Activated CD8-positive, alpha-beta T cell treated with anti-CD3 and anti-CD28 coated beads for 36 hours (primary cell): ENCODE measurements at regions of chr12 and their contacts with region 1.

Region 1: GRCh38 chr12:121095544-121096198 is 37.0 kb upstream of the P2RX7 start:
- DNase-seq: peak; percentile 87
- ATAC-seq: peak; percentile 91
- H3K4me3 Mint-ChIP-seq: peak overlapping the region; percentile 55
- H3K27ac Mint-ChIP-seq: no peak overlapping the region
- H3K4me1 Mint-ChIP-seq: peaks cover 39% of the 10 kb centered on the region
- H3K27me3 Mint-ChIP-seq: peaks cover 5% of the 10 kb centered on the region
- CTCF ChIP-seq: peak; percentile 90

Region 2: GRCh38 chr12:121110211-121110940 is 14.7 kb after region 1 on chr12:
- CTCF ChIA-PET with region 1: interaction called, 10 read pairs
- POLR2A ChIA-PET with region 1: no interaction called
- intact Hi-C with region 1: no loop called
- DNase-seq: peak; percentile 82
- ATAC-seq: peak; percentile 86
- H3K4me3 Mint-ChIP-seq: no peak overlapping the region
- H3K27ac Mint-ChIP-seq: no peak overlapping the region
- H3K4me1 Mint-ChIP-seq: peaks cover 2% of the 10 kb centered on the region
- H3K27me3 Mint-ChIP-seq: no peaks in the 10 kb centered on the region
- CTCF ChIP-seq: peak; percentile 97